ENCODE measurements at regions of chr7 and their contacts with region 1.

Region 1: DNA sequence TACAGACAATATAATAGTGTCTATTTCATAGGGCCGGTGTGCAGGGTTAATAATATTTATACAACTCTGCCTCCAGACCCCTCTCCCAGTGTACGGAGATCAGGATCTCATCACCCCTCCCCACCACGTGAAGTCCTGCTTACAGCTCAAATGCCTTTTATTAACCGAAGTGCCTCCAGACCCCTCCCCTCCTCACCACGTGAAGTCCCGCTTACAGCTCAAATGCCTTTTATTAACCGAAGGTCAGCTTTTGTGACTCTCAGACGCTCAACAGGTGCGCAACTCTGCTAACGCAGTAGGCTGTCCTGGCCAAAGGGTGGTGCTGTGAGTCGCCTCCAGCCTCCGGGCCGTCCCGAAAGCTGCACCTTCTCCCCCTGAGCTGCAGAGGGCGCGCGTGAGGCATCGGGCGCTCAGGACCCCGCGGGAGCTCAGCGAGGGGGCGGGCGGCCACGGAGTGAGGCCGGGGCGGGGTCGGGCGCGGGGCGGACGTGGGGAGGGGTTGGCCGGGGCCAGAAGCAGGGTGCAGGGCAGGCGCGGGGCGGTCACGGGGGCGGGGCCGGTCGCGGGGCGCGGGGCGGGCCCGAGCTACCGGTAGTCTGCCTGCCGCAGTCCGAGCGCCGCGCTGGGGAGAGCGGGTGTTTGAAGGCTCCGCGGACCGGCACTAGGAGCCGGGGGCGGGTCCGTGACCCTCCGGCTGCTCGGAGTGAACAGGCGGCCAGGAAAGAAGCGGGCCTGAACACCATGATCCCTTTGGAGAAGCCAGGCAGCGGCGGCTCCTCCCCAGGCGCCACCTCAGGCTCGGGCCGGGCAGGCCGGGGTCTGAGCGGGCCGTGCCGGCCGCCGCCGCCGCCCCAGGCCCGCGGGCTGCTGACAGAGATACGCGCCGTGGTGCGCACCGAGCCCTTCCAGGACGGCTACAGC is at the start of gene STK17A:
- DNase-seq: peak; percentile 88 to 94 (median 92)
- H3K4me3 ChIP-seq: peak within 1 kb of the TSS; percentile 84 to 97 (median 92)
- H3K4me3 Mint-ChIP-seq: peak within 1 kb of the TSS; percentile 91 to 96
- H3K27ac ChIP-seq: peak within 1 kb of the TSS; percentile 62 to 77
- H3K27ac Mint-ChIP-seq: peak within 1 kb of the TSS; percentile 64 to 88 (median 83)
- H3K4me1 ChIP-seq: peaks cover 18 to 26% of the 10 kb centered on the region in 2 donors
- H3K4me1 Mint-ChIP-seq: peaks cover 25% of the 10 kb centered on the region
- H3K27me3 ChIP-seq: peaks cover 12 to 14% of the 10 kb centered on the region in 2 donors
- H3K27me3 Mint-ChIP-seq: peaks cover 16 to 23% (median 18%) of the 10 kb centered on the region in 3 donors
- CTCF ChIP-seq: peak; percentile 95
- polyA plus RNA-seq, gene STK17A: 2.8 to 14.1 (median 9.5) TPM

Region 2: GRCh38 chr7:43700059-43700501 is 117.3 kb after region 1 on chr7:
- intact Hi-C with region 1: loop called (anchors 2 to 10 kb)
- DNase-seq: peak; percentile 15 to 48 (median 27)
- H3K4me3 ChIP-seq: no peak overlapping the region
- H3K4me3 Mint-ChIP-seq: no peak overlapping the region
- H3K27ac ChIP-seq: no peak overlapping the region
- H3K27ac Mint-ChIP-seq: no peak overlapping the region
- H3K4me1 ChIP-seq: no peaks in the 10 kb centered on the region
- H3K4me1 Mint-ChIP-seq: no peaks in the 10 kb centered on the region
- H3K27me3 ChIP-seq: no peaks in the 10 kb centered on the region
- H3K27me3 Mint-ChIP-seq: peaks cover 0 to 1% (median 0%) of the 10 kb centered on the region in 3 donors
- CTCF ChIP-seq: peak; percentile 77